Posterior vena cava (tissue), 2 donors: ENCODE measurements at regions of chr2 and their contacts with region 1.

Region 1: DNA sequence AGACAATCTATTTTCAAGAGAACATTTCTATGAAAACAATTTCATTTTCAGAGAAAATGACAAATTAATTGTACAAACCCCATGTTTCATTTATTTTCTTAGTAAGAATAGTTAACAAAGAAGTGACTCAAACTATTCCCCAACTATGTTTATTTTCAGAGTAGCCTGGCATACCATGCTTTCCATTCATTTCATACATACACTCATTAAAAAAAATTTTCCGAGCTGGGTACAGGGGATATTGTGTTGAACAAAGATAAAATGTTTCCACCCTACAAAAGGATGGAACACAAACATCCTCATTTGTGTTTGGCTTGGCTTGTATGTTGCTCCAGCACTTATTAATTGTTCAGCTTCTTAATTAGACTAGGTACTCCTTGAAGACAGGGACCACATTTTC is 331.4 kb downstream of the EXOC6B start:
- DNase-seq: no peak

Region 2: GRCh38 chr2:72254831-72255447 is 239.5 kb before region 1 on chr2:
- intact Hi-C with region 1: loop called in 1 of 2 experiments (anchors 5 kb)
- DNase-seq: no peak

Region 3: DNA sequence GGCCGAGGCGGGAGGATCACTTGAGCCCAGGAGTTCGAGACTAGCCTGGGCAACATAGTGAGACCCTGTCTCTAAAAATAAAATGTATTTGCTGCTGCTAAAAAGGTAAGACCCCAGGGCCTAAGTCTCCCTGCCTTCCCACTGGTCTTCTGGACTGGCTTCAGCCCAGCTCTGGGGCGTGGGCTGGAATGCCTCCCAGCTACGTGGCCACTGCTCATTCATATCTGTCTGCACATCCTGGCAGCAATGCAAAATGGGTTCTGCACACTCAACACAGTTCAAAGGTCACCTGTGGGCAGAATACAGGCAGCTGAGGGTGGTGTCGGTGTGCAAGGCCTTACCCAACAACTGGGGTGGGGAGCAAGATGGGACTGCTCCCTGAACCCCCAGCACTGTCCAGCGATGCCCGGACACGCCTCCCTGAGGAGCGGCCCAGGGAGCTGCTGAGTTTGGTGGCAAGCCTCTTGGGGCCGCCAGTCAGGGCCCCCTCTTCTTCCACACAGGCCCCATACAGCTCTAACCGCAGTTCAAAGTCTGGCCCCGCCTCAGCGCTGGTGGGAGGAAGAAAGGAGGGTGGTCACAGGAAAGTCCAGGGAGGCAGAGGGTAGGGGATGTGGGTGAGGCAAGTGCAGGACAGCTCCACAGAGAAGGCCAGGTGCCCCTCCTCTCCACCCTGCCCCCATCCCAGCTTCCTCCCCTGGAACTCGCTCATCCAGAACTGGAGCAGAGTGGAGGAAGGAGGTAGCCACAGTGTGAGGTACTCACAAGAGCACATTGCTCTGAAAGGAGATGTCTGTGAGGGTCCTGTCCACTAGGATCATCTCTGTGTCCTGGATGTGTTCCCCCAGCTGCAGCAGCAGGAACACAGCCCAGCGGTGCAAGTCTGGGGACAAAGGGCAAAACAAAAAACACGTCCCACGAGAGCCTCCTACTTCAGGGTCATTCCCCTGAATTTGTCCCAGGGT is 1935.4 kb after region 1 on chr2:
- intact Hi-C with region 1: no loop called
- DNase-seq: no peak